Vagina (tissue), 2 donors: ENCODE measurements at regions of chr6 and their contacts with region 1.

Region 1: GRCh38 chr6:31139599-31139998 is 733 bp upstream of the PSORS1C2 start:
- DNase-seq: no peak
- H3K4me3 ChIP-seq: no peak overlapping the region
- H3K27ac ChIP-seq: no peak overlapping the region
- H3K4me1 ChIP-seq: peaks cover 18% of the 10 kb centered on the region
- H3K27me3 ChIP-seq: no peaks in the 10 kb centered on the region
- CTCF ChIP-seq: no peak
- POLR2A ChIP-seq: no peak

Region 2: GRCh38 chr6:30942338-30943060 is 197.1 kb before region 1 on chr6:
- intact Hi-C with region 1: no loop called
- DNase-seq: no peak
- H3K4me3 ChIP-seq: no peak overlapping the region
- H3K27ac ChIP-seq: no peak overlapping the region
- H3K4me1 ChIP-seq: peaks cover 20% of the 10 kb centered on the region
- H3K27me3 ChIP-seq: no peaks in the 10 kb centered on the region
- CTCF ChIP-seq: no peak
- POLR2A ChIP-seq: no peak

Region 3: GRCh38 chr6:31122791-31123706 is 16.6 kb before region 1 on chr6:
- intact Hi-C with region 1: no loop called
- DNase-seq: no peak
- H3K4me3 ChIP-seq: no peak overlapping the region
- H3K27ac ChIP-seq: no peak overlapping the region
- H3K4me1 ChIP-seq: peaks cover 40% of the 10 kb centered on the region
- H3K27me3 ChIP-seq: no peaks in the 10 kb centered on the region
- CTCF ChIP-seq: no peak
- POLR2A ChIP-seq: no peak

Region 4: GRCh38 chr6:31197559-31198305 is 58.1 kb after region 1 on chr6:
- intact Hi-C with region 1: loop called (anchors 5 kb)
- DNase-seq: no peak
- H3K4me3 ChIP-seq: peak overlapping the region; percentile 60 to 71
- H3K27ac ChIP-seq: peak overlapping the region; percentile 93
- H3K4me1 ChIP-seq: peaks cover 12% of the 10 kb centered on the region
- H3K27me3 ChIP-seq: no peaks in the 10 kb centered on the region
- CTCF ChIP-seq: no peak
- POLR2A ChIP-seq: peak in 1 of 2 donors; percentile 71

Region 5: DNA sequence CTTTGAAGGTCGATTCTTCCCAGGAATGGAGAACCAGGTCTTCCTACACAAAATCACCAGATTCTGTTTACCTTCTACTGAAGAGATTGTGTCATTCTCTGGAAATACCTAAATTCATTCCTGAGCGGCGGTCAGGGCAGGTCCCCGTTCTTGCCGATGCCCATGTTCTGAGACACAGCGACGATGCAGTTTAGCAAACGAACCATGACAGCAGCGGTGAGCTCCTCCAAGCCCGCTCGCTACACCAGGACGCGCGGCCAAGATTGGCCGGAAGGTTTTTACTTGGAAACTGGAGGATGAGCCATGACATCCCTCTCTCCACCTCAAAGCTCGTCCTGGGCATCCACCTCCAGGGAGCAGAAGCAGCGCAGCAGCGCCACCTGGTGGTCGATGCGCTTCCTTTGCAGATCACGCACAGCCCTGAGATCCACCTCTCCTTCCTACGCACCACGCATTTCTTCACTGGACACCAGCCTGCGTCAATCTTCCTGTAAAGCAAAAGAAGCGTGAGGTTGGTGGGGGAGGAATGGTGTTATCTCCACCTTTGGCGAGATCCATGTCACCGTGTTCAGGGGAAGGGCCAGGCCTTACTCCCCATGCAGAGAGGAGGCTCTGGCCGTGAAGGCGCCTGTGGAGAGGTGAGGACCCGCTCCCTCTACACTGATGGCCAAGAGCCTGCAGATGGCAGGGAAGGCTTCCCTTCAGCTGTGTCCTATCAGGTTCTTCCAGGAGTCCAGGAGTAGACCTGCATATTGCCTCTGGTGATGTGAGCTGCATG is 227.3 kb after region 1 on chr6:
- intact Hi-C with region 1: loop called (anchors 5 kb)
- DNase-seq: no peak
- H3K4me3 ChIP-seq: peak overlapping the region; percentile 24 to 33
- H3K27ac ChIP-seq: no peak overlapping the region
- H3K4me1 ChIP-seq: no peaks in the 10 kb centered on the region
- H3K27me3 ChIP-seq: no peaks in the 10 kb centered on the region
- CTCF ChIP-seq: peak; percentile 92 to 99 (median 93)
- POLR2A ChIP-seq: no peak

Region 6: DNA sequence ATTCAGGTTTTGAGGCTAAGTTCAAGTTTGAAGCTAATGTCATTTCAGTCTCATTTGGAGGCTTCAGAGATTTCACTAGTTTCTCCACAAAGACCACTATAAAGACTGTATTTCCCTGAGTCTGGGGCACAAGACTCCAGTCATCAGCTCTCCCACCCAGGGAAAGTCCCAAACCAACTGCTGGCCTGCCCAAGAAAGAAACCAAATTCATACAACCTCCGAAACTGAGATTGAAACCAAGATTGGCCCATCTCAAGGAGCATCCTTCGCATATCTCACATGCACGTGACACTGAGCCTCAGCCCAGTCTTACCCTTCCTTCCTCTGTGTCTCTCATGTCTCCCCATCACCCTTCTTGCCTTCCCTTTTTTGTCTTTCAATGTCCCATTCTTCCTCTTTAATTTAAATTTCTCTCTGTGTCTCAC is 428.9 kb after region 1 on chr6:
- intact Hi-C with region 1: no loop called
- DNase-seq: no peak
- H3K4me3 ChIP-seq: no peak overlapping the region
- H3K27ac ChIP-seq: no peak overlapping the region
- H3K4me1 ChIP-seq: no peaks in the 10 kb centered on the region
- H3K27me3 ChIP-seq: no peaks in the 10 kb centered on the region
- CTCF ChIP-seq: no peak
- POLR2A ChIP-seq: no peak